Caco-2 (cell line): ENCODE measurements at regions of chr9 and their contacts with region 1.

Region 1: GRCh38 chr9:96327694-96328352 is 25.8 kb upstream of the HSD17B3 start:
- DNase-seq: peak; percentile 52 to 70
- H3K4me3 ChIP-seq: no peak overlapping the region
- H3K4me3 Mint-ChIP-seq: no peak overlapping the region
- H3K27ac Mint-ChIP-seq: no peak overlapping the region
- H3K4me1 ChIP-seq: no peaks in the 10 kb centered on the region
- H3K4me1 Mint-ChIP-seq: peaks cover 9% of the 10 kb centered on the region
- H3K27me3 ChIP-seq: no peaks in the 10 kb centered on the region
- H3K27me3 Mint-ChIP-seq: no peaks in the 10 kb centered on the region
- CTCF ChIP-seq: peak; percentile 74 to 87

Region 2: DNA sequence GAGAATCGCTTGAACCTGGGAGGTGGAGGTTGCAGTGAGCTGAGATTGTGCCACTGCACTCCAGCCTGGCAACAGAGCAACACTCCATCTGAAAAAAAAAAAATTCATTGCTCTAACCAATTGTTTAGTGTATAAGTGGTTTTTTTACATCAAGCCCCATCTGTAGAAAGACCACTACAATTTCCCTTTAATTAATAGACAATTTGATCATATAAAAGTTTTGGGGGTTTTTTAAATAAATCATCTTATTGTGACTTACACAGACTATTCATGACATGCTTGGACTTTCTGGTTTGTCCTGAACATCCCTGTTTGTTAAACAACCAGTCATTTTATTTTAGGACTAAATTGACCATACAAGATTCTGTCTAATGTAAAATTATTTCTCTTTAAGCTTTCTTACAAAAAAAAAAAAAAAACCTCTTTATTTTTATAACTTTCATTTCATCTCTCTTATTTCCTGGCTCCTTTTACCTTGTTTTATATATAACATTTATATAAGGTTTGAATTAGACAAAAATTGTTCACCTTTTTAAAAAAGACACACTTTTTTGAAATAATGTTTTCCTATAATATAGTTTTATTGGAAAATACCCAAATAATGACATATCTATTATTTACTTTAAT is 1000.5 kb before region 1 on chr9:
- CTCF ChIA-PET with region 1: no interaction called
- POLR2A ChIA-PET with region 1: no interaction called
- intact Hi-C with region 1: no loop called
- DNase-seq: no peak
- H3K4me3 ChIP-seq: no peak overlapping the region
- H3K4me3 Mint-ChIP-seq: no peak overlapping the region
- H3K27ac Mint-ChIP-seq: no peak overlapping the region
- H3K4me1 ChIP-seq: peaks cover 9% of the 10 kb centered on the region
- H3K4me1 Mint-ChIP-seq: no peaks in the 10 kb centered on the region
- H3K27me3 ChIP-seq: no peaks in the 10 kb centered on the region
- H3K27me3 Mint-ChIP-seq: no peaks in the 10 kb centered on the region
- CTCF ChIP-seq: no peak

Region 3: DNA sequence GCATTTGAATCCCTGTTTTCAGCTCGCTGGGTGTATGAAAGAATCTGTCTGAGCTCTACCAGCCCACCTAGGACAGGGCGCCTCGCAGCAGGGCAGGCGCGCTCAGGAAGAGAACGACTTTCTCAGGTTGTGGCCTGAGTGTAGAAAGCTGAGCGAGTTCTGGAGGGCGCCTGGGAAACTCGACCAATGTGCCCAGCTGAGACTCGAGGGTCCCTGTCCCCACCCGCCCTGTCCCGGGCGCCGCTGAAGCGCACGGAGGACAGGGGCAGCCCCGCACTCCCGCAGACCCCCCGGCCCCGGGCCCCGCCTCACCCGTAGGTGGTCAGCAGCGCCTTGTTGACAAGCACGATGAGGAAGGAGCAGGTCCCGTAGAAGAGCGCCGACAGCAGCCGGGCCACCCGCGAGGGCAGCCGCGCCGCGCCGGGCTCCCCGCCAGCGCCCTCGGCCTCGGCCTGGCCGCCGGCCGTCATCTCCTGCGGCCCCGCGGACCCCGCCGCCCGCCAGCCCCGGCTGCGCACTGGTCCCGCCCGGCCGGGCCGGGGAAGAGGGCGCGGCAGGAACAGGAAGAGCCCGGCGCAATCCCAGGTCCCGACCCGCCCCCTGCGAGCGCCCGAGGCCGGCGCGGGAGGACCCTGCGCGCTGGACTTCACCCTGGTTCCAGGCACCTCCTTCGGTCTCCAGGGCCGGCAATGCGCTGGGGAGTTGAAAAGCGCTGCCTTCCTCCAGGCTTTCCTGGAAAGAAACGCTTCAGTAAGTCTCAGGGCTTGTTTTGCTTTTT is 55.5 kb after region 1 on chr9 and contains the start of gene SLC35D2:
- CTCF ChIA-PET with region 1: interaction called, 3 read pairs
- POLR2A ChIA-PET with region 1: no interaction called
- intact Hi-C with region 1: loop called (anchors 10 kb)
- DNase-seq: peak; percentile 84 to 88
- H3K4me3 ChIP-seq: peak within 1 kb of the TSS; percentile 71
- H3K4me3 Mint-ChIP-seq: peak within 1 kb of the TSS; percentile 87
- H3K27ac Mint-ChIP-seq: peak within 1 kb of the TSS; percentile 79
- H3K4me1 ChIP-seq: peaks cover 42% of the 10 kb centered on the region
- H3K4me1 Mint-ChIP-seq: peaks cover 36% of the 10 kb centered on the region
- H3K27me3 ChIP-seq: no peaks in the 10 kb centered on the region
- H3K27me3 Mint-ChIP-seq: no peaks in the 10 kb centered on the region
- CTCF ChIP-seq: no peak
- total RNA-seq, gene SLC35D2: 77.5 and 81.0 TPM in 2 replicates

Region 4: DNA sequence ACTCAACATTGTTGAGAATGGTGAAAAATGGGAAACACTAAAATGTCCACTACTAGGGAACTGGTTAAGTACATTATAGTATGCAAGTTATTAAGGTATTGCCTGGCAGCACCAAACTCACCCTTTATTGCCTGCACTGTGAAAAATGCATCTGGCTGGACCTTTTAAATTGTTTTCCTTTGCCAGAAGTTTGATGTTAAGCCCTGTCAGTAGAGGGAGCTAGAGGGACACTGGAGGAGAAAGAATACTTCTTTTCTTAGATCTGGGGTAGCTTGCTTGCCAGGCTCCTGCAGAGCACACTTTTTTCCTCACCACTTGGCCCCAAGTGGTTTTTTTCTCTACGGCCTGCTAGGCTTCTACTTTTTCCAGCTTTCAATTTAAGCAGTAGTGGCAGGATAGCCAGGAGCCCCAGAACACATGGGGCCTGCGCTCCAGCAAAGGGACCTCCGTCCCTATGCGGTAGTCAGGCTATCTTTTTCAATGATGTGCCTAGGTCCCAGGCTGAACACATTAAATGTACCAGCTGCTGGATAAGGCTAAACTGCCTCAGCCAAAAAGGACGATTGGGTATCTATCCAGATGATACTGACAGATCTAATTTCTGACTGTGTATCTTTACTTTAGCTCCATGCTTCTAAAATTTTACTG is 114.1 kb after region 1 on chr9:
- CTCF ChIA-PET with region 1: interaction called, 7 read pairs
- POLR2A ChIA-PET with region 1: no interaction called
- intact Hi-C with region 1: loop called (anchors 1 kb)
- DNase-seq: peak; percentile 42 to 71
- H3K4me3 ChIP-seq: no peak overlapping the region
- H3K4me3 Mint-ChIP-seq: no peak overlapping the region
- H3K27ac Mint-ChIP-seq: no peak overlapping the region
- H3K4me1 ChIP-seq: no peaks in the 10 kb centered on the region
- H3K4me1 Mint-ChIP-seq: no peaks in the 10 kb centered on the region
- H3K27me3 ChIP-seq: no peaks in the 10 kb centered on the region
- H3K27me3 Mint-ChIP-seq: no peaks in the 10 kb centered on the region
- CTCF ChIP-seq: peak; percentile 63 to 64

Region 5: DNA sequence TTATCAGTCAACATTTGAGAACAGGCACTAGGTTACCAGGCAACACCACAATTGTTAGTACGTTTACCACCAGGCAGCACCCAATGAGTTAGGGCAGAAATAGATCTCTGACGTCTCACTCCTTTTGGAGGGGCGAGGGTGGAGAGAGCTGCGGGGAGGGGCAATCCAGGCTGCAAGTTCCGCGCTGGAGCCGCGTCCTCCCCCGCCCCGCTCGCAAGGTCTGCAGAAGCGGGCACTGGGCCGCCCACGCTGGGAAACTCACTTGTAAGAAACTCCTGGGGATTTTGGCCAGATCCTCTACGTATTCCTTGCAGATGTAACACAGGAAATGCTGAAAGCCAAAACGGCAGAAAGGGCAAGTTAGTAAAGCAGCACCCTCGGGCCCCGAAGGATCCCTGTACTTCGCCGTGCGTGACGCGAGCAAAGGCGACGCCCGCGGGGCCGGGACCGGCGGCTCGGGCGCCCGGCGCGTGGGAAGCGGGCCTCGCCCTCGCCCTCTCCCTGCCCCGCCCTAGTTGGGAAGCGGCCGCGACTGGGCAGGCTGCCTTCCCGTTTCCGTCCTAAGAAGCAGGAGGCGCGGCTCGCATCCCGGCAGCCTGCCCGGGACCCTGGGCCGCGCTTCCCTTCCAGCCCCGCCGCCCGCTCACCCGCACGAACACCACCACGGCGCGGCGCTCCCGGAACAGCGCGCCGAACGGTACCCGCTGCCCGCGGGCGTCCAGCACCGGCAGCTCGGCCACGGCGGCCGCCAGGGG is 326.8 kb after region 1 on chr9:
- CTCF ChIA-PET with region 1: no interaction called
- POLR2A ChIA-PET with region 1: no interaction called
- intact Hi-C with region 1: loop called (anchors 5 kb)
- DNase-seq: peak; percentile 73 to 77
- H3K4me3 ChIP-seq: peak overlapping the region; percentile 91
- H3K4me3 Mint-ChIP-seq: peak overlapping the region; percentile 87
- H3K27ac Mint-ChIP-seq: peak overlapping the region; percentile 88
- H3K4me1 ChIP-seq: peaks cover 4% of the 10 kb centered on the region; the same call in 1 of the 2 replicates
- H3K4me1 Mint-ChIP-seq: peaks cover 25% of the 10 kb centered on the region
- H3K27me3 ChIP-seq: no peaks in the 10 kb centered on the region
- H3K27me3 Mint-ChIP-seq: no peaks in the 10 kb centered on the region
- CTCF ChIP-seq: no peak

Region 6: GRCh38 chr9:96667361-96667728 is 339.5 kb after region 1 on chr9:
- CTCF ChIA-PET with region 1: no interaction called
- POLR2A ChIA-PET with region 1: no interaction called
- intact Hi-C with region 1: loop called (anchors 5 kb)
- DNase-seq: no peak
- H3K4me3 ChIP-seq: no peak overlapping the region
- H3K4me3 Mint-ChIP-seq: no peak overlapping the region
- H3K27ac Mint-ChIP-seq: no peak overlapping the region
- H3K4me1 ChIP-seq: no peaks in the 10 kb centered on the region
- H3K4me1 Mint-ChIP-seq: peaks cover 6% of the 10 kb centered on the region
- H3K27me3 ChIP-seq: no peaks in the 10 kb centered on the region
- H3K27me3 Mint-ChIP-seq: no peaks in the 10 kb centered on the region
- CTCF ChIP-seq: no peak